Activated CD8-positive, alpha-beta T cell treated with anti-CD3 and anti-CD28 coated beads for 36 hours (primary cell): ENCODE measurements at regions of chr2 and their contacts with region 1.

Region 1: GRCh38 chr2:86195055-86195807 is at the start of gene IMMT:
- DNase-seq: peak; percentile 97
- ATAC-seq: peak; percentile 93
- H3K4me3 Mint-ChIP-seq: peak within 1 kb of the TSS; percentile 93
- H3K27ac Mint-ChIP-seq: peak within 1 kb of the TSS; percentile 90
- H3K4me1 Mint-ChIP-seq: peaks cover 32% of the 10 kb centered on the region
- H3K27me3 Mint-ChIP-seq: no peaks in the 10 kb centered on the region
- CTCF ChIP-seq: no peak
- total RNA-seq, gene IMMT: 143 to 144 TPM

Region 2: DNA sequence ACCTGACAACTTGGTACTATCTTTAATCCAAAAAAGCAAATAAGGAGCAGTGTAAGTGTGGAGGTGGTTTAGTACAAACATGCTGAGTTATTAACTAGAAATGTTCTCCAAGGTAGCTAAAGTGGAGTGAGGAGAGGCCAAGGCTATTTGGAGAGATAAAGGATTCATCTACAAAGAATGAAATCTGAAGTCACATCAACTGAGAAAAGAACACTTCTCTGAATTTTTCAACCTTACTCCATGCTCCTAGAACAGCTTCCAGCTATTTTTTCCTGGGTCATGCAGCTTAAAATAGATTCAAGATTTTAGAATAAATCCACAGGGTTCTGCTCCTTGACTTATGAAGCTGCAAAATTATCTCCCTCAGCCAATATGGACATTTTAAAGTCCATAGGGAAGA is 18.6 kb before region 1 on chr2:
- CTCF ChIA-PET with region 1: no interaction called
- POLR2A ChIA-PET with region 1: interaction called, 11 read pairs
- intact Hi-C with region 1: no loop called
- DNase-seq: no peak
- ATAC-seq: no peak
- H3K4me3 Mint-ChIP-seq: no peak overlapping the region
- H3K27ac Mint-ChIP-seq: no peak overlapping the region
- H3K4me1 Mint-ChIP-seq: peaks cover 11% of the 10 kb centered on the region
- H3K27me3 Mint-ChIP-seq: no peaks in the 10 kb centered on the region
- CTCF ChIP-seq: no peak

Region 3: DNA sequence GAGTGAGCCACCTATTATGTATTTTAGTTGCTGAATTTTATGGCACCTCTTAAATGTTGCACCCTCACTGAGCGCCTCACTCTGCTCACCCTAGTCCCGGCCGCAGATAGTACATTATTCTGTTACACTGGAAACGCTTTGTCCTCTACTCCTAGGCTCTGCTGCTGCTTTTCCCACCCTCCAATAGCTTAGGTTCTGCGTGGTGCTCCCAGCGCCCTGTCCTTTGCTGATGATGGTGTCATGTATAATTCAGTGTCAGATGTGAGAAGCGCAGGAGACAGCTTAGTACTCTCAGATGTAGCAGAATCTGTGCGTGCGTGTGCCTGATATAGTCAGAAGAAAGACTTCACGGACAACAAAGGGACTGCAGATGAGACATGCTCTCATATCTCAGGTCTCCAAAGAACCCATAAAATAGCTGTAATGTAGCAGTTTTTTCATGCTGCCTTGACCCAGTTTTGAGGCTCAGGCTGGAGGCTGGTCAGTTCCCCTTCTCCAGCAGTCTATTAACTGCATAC is 143.6 kb after region 1 on chr2:
- CTCF ChIA-PET with region 1: no interaction called
- POLR2A ChIA-PET with region 1: no interaction called
- intact Hi-C with region 1: no loop called
- DNase-seq: no peak
- ATAC-seq: no peak
- H3K4me3 Mint-ChIP-seq: no peak overlapping the region
- H3K27ac Mint-ChIP-seq: no peak overlapping the region
- H3K4me1 Mint-ChIP-seq: peaks cover 11% of the 10 kb centered on the region
- H3K27me3 Mint-ChIP-seq: peaks cover 58% of the 10 kb centered on the region
- CTCF ChIP-seq: no peak